T-cell (primary cell): ENCODE measurements at regions of chr19 and their contacts with region 1.

Region 1: GRCh38 chr19:7928736-7929701 is 3.1 kb upstream of the CTXN1 start:
- DNase-seq: peak in 34 of 35 experiments; percentile 43 to 89 (median 78)
- ATAC-seq: peak; percentile 23 to 60 (median 37)
- H3K4me3 ChIP-seq: no peak overlapping the region
- H3K4me3 Mint-ChIP-seq: peak overlapping the region in 1 of 3 donors; percentile 38
- H3K27ac ChIP-seq: no peak overlapping the region
- H3K27ac Mint-ChIP-seq: peak overlapping the region in 1 of 2 donors; percentile 15
- H3K4me1 ChIP-seq: peaks cover 2 to 21% of the 10 kb centered on the region in 2 experiments
- H3K4me1 Mint-ChIP-seq: peaks cover 0 to 19% (median 12%) of the 10 kb centered on the region in 3 donors
- H3K27me3 ChIP-seq: no peaks in the 10 kb centered on the region
- H3K27me3 Mint-ChIP-seq: no peaks in the 10 kb centered on the region

Region 2: GRCh38 chr19:7953060-7953459 is 24.0 kb after region 1 on chr19:
- CTCF ChIA-PET with region 1: no interaction called
- POLR2A ChIA-PET with region 1: no interaction called
- DNase-seq: no peak
- ATAC-seq: no peak
- H3K4me3 ChIP-seq: no peak overlapping the region
- H3K4me3 Mint-ChIP-seq: no peak overlapping the region
- H3K27ac ChIP-seq: no peak overlapping the region
- H3K27ac Mint-ChIP-seq: no peak overlapping the region
- H3K4me1 ChIP-seq: no peaks in the 10 kb centered on the region
- H3K4me1 Mint-ChIP-seq: no peaks in the 10 kb centered on the region
- H3K27me3 ChIP-seq: peaks cover 0 to 3% of the 10 kb centered on the region in 2 experiments
- H3K27me3 Mint-ChIP-seq: no peaks in the 10 kb centered on the region

Region 3: GRCh38 chr19:8028951-8029491 is 100.0 kb after region 1 on chr19:
- CTCF ChIA-PET with region 1: no interaction called
- POLR2A ChIA-PET with region 1: interaction called in 1 of 2 experiments, 14 read pairs
- DNase-seq: no peak
- ATAC-seq: no peak
- H3K4me3 ChIP-seq: no peak overlapping the region
- H3K4me3 Mint-ChIP-seq: no peak overlapping the region
- H3K27ac ChIP-seq: no peak overlapping the region
- H3K27ac Mint-ChIP-seq: no peak overlapping the region
- H3K4me1 ChIP-seq: no peaks in the 10 kb centered on the region
- H3K4me1 Mint-ChIP-seq: no peaks in the 10 kb centered on the region
- H3K27me3 ChIP-seq: peaks cover 0 to 11% of the 10 kb centered on the region in 2 experiments
- H3K27me3 Mint-ChIP-seq: peaks cover 0 to 2% of the 10 kb centered on the region in 2 donors